CD4-positive, alpha-beta memory T cell (primary cell): ENCODE measurements at regions of chr2 and their contacts with region 1.

Region 1: GRCh38 chr2:177552422-177553175 is 160.0 kb downstream of the AGPS start:
- DNase-seq: peak; percentile 94 to 96 (median 96)
- H3K4me3 ChIP-seq: peak overlapping the region; percentile 57 to 90
- H3K4me3 Mint-ChIP-seq: peak overlapping the region; percentile 95 to 99 (median 98)
- H3K27ac ChIP-seq: peak overlapping the region; percentile 97
- H3K27ac Mint-ChIP-seq: peak overlapping the region; percentile 98 to 100 (median 100)
- H3K4me1 ChIP-seq: peaks cover 9% of the 10 kb centered on the region
- H3K4me1 Mint-ChIP-seq: peaks cover 6 to 20% (median 8%) of the 10 kb centered on the region in 4 donors
- H3K27me3 ChIP-seq: no peaks in the 10 kb centered on the region
- H3K27me3 Mint-ChIP-seq: peaks cover 3 to 4% of the 10 kb centered on the region in 2 donors

Region 2: GRCh38 chr2:177392373-177393202 is 160.0 kb before region 1 on chr2 and contains the start of gene AGPS:
- CTCF ChIA-PET with region 1: no interaction called
- POLR2A ChIA-PET with region 1: interaction called, 3 read pairs
- intact Hi-C with region 1: loop called (anchors 1 kb)
- DNase-seq: peak; percentile 66 to 76 (median 72)
- H3K4me3 ChIP-seq: peak within 1 kb of the TSS; percentile 78
- H3K4me3 Mint-ChIP-seq: peak within 1 kb of the TSS; percentile 92 to 98 (median 94)
- H3K27ac ChIP-seq: peak within 1 kb of the TSS; percentile 56
- H3K27ac Mint-ChIP-seq: peak within 1 kb of the TSS; percentile 79 to 94 (median 92)
- H3K4me1 ChIP-seq: peaks cover 47% of the 10 kb centered on the region
- H3K4me1 Mint-ChIP-seq: peaks cover 47 to 63% (median 53%) of the 10 kb centered on the region in 4 donors
- H3K27me3 ChIP-seq: no peaks in the 10 kb centered on the region
- H3K27me3 Mint-ChIP-seq: no peaks in the 10 kb centered on the region
- total RNA-seq, gene AGPS: 28.3 to 29.7 TPM

Region 3: DNA sequence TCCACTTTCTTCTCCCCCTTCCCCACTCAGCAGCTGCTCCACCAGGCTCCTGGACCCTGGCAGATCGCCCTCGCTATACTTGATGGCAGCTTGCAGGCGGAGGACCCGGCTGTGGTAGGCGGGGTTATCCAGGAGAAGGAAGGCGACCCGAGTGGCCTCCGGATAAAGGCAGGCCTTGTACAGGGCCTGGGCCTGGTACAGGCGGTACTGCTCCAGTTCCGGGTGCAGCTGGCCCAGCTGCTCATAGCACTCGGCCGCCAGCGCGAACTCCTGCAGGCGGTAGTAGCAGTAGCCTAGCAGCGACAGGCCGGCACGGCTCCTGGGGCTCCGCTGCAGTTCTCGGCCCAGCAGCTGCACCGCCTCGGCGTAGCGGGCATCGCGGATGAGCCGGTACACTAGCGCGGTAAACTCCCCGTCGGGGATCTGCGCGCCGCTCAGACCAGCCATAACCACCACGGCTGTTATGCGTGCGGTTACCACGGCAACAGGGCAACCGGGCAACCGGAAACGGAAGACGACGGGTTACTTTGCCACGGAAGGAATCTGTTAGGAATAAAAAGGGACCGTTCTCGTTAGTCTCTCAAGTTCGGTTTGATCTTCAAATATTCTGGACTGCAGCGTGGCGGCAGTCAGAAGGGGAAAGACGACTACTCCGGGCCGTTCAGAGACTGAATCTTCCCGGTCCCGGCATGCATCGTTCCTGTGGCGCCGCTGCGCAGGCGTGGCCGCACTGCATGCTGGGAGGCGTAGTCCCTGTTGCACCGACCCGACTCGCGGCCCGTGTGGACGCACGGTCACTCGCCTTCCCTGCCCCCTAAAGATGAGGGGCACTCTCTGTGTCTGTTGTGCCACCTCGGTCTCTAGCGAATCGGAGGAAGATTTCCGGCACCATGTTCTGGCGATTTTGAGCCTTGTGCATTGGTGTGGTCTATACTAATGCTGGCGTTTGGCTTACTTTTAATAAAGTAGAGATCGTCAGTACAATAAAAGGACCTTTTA is 66.0 kb after region 1 on chr2:
- CTCF ChIA-PET with region 1: no interaction called
- POLR2A ChIA-PET with region 1: interaction called, 3 read pairs
- intact Hi-C with region 1: loop called (anchors 1 kb)
- DNase-seq: peak; percentile 92 to 94 (median 93)
- H3K4me3 ChIP-seq: peak overlapping the region; percentile 85 to 87
- H3K4me3 Mint-ChIP-seq: peak overlapping the region; percentile 92 to 98 (median 97)
- H3K27ac ChIP-seq: peak overlapping the region; percentile 97
- H3K27ac Mint-ChIP-seq: peak overlapping the region; percentile 98 to 100 (median 100)
- H3K4me1 ChIP-seq: peaks cover 5% of the 10 kb centered on the region
- H3K4me1 Mint-ChIP-seq: peaks cover 3 to 19% (median 8%) of the 10 kb centered on the region in 4 donors
- H3K27me3 ChIP-seq: no peaks in the 10 kb centered on the region
- H3K27me3 Mint-ChIP-seq: peaks cover 4 to 9% of the 10 kb centered on the region in 2 donors